Astrocyte of the cerebellum (primary cell): ENCODE measurements at regions of chr5 and their contacts with region 1.

Region 1: DNA sequence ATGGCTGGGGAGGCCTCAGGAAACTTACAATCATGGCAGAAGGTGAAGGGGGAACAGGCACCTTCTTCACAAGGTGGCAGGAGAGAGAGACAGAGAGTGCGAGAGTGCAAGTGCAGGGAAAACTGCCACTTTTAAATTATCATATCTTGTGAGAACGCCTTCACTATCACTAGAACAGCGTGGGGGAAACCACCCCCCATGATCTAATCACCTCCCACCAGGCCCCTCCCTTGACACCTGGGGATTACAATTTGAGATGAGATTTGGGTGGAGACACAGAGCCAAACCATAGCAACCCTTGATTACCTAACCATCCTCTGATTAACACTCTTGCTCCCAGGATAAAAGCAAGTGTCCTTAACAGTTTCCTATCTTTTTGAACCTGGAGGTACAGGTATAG is 21.1 kb downstream of the ADAMTS19 start:
- DNase-seq: no peak
- H3K4me3 ChIP-seq: no peak overlapping the region
- CTCF ChIP-seq: no peak

Region 2: DNA sequence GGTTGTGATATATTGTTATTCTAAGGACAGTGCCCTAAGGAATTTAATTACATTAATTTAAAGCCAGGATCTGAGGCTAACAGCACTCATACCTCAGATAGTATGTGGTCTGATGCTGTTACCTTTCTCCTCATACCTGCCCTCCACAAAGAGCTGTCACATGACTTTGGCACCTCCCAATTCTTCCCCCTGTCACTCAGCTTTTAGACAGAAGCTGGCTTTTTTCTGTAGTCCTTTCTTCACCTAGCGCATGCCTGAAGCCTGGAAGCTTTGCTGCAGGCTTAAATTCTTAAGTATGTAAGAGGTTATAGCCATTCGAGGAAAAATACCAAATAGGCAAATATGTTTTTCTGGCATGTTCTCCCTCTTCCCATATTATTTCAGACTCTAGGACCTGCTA is 82.1 kb before region 1 on chr5:
- in situ Hi-C with region 1: loop called (anchors 5 kb)
- DNase-seq: no peak
- H3K4me3 ChIP-seq: no peak overlapping the region
- CTCF ChIP-seq: no peak

Region 3: GRCh38 chr5:129438324-129438887 is 42.8 kb before region 1 on chr5:
- in situ Hi-C with region 1: no loop called
- DNase-seq: no peak
- H3K4me3 ChIP-seq: no peak overlapping the region
- CTCF ChIP-seq: no peak

Region 4: GRCh38 chr5:129569295-129569694 is 88.1 kb after region 1 on chr5:
- in situ Hi-C with region 1: no loop called
- DNase-seq: peak; percentile 8
- H3K4me3 ChIP-seq: no peak overlapping the region
- CTCF ChIP-seq: no peak

Region 5: DNA sequence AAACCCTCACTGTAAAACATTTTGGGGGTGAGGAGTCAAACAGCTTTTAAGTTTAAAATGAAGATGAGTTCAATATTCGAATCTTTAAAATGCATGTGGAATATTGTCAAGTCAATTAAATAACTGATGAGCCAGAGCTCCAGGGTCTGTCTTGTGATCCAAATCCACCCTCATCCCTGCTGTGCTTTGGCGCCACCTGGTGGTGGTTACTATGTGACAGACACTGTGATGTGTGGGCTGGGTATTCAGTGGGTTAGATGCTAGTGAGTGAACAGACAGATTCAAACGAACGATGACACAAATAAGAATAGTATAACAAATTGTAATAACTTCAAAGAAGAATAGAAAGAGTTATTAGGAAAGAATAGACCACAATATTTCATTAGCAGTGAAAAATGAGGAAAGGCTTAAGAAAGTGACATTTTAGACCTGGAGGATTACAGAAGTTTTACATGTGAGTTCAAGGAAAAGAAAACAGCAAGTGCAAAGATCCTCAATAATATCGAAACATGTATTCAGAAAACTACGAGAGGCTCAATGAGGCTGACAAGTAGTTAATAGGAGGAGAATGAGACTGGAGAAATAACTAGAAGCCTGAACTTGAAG is 371.7 kb after region 1 on chr5:
- in situ Hi-C with region 1: no loop called
- DNase-seq: peak; percentile 48
- H3K4me3 ChIP-seq: no peak overlapping the region
- CTCF ChIP-seq: peak; percentile 99